ENCODE measurements at regions of chr13 and their contacts with region 1.

Region 1: GRCh38 chr13:33931397-33932311 is 113.7 kb downstream of the RFC3 start:
- DNase-seq: peak in 3 of 5 donors; percentile 36 to 80 (median 63)
- H3K4me3 ChIP-seq: no peak overlapping the region
- H3K27ac ChIP-seq: no peak overlapping the region
- H3K4me1 ChIP-seq: no peaks in the 10 kb centered on the region
- H3K27me3 ChIP-seq: no peaks in the 10 kb centered on the region
- CTCF ChIP-seq: peak; percentile 32

Region 2: GRCh38 chr13:33799950-33800592 is 131.6 kb before region 1 on chr13:
- intact Hi-C with region 1: no loop called
- DNase-seq: peak in 2 of 5 donors; percentile 30 to 64
- H3K4me3 ChIP-seq: no peak overlapping the region
- H3K27ac ChIP-seq: no peak overlapping the region
- H3K4me1 ChIP-seq: no peaks in the 10 kb centered on the region
- H3K27me3 ChIP-seq: no peaks in the 10 kb centered on the region
- CTCF ChIP-seq: peak; percentile 24

Region 3: GRCh38 chr13:35144166-35144890 is 1212.7 kb after region 1 on chr13:
- intact Hi-C with region 1: loop called (anchors 10 kb)
- DNase-seq: no peak
- H3K4me3 ChIP-seq: no peak overlapping the region
- H3K27ac ChIP-seq: no peak overlapping the region
- H3K4me1 ChIP-seq: no peaks in the 10 kb centered on the region
- H3K27me3 ChIP-seq: no peaks in the 10 kb centered on the region
- CTCF ChIP-seq: no peak